GM13976 (cell line): ENCODE measurements at regions of chr14 and their contacts with region 1.

Region 1: DNA sequence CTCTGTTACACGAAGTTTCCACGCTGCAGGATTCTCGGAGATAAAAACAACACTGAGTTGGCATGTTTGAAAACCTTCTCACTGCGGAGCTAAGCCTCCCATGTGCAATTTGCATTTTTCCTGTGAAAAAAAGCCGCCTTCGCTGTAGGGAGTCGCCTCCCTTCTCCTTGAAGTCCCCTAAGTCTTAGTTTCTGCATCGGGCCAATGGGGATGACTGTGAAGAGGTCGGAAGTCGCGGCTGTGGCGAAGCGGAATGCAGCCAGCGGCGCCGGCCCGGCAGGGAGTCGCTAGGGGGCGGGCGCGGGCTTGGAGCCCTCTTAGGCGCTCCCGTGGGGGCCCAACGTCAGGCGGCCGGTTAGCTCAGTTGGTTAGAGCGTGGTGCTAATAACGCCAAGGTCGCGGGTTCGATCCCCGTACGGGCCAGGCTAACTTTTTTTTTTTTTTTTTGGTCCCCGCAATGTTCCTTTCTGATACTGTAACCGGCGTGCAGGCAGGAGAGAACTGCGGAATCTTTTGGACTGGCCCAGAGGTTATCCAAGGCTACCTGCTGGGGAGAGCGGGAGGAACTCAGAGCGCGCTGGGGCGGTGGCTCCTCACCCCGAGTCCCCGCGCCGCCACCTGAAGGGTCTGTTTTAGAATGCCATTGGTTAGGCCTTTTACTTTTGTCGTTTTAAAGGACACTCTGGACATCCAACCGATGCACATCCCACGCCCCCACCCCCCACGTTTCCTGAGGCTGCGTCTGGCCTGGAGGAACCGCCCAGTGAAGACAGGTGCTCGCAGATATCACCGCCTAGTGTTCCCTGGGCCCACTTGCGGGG is 2.6 kb upstream of the ZNF839 start:
- DNase-seq: peak; percentile 93
- CTCF ChIP-seq: peak; percentile 97

Region 2: GRCh38 chr14:101964297-101965144 is 352.4 kb before region 1 on chr14 and contains the start of gene DYNC1H1:
- in situ Hi-C with region 1: loop called (anchors 5 kb)
- DNase-seq: peak; percentile 95
- CTCF ChIP-seq: no peak

Region 3: DNA sequence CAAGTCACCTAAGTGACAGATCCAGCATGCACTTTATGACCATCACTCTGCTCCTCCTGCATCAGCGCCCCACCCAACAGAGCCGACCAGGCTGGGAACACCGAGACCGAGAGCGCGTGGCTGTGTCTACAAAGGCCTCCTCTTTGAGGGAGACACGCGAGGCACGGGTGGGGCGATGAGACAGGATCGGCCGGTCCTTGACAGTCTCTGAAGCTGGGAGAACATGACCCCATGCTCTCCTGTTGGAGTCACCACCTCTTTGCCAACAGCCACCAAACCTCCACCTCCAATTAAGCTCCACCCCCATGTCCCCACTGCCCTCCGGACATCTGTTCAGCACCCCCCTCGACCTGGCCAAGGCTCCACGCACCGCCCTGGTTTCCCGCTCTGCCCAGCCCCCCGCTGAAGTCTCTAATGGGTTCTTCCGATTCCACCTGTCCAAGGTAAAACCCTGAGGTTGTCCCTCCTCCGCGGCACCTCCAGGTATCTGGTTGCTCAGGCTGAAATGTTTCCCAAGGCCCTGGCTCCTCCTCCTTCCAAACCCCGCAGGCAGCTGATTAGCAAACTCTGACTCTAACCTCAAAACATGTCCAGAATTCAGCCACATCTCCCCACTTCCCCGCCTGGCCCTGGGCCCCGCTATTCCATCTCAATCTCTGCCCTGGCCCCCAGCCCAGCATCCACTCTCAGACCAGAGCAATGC is 261.6 kb before region 1 on chr14:
- in situ Hi-C with region 1: loop called (anchors 10 kb)
- DNase-seq: no peak
- CTCF ChIP-seq: no peak

Region 4: DNA sequence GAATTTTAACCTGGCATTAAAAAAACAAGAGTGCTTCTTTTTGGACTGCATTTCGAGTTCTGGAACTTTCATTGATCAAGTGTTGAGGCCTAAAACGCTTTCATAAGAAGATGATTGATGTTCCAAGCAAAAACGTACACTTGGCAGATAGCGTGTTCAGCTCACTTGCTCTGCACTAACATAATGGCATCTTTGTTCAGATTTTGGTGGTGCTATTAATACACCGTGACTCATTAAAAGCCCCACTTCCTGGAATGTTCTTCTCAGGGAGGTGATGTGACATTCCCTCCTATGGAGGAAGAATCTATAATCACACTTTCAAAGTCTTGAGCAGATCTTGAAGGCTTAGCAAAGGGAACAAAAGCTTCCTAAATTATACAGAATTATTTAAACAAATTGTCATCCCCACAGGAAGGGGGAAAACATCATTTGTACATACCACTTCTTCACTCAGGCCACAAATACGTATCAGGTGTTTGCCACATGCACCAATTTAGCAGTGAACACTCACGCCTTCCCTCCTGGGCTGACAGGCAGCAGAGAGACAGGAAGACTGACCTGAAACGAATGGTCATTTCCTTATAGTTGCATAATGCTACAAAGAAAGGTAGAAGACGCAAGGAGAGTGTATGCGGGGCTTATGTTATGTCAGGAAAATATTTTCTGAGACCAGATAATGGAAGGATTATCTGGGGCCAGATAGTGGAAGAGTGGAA is 245.5 kb before region 1 on chr14:
- in situ Hi-C with region 1: no loop called
- DNase-seq: no peak
- CTCF ChIP-seq: no peak